Mammary epithelial cell (primary cell): ENCODE measurements at regions of chr15 and their contacts with region 1.

Region 1: GRCh38 chr15:51162865-51163762 is 68.4 kb upstream of the TNFAIP8L3 start:
- DNase-seq: peak; percentile 75
- H3K4me3 ChIP-seq: peak overlapping the region in 2 of 3 experiments; percentile 8 to 34
- H3K27ac ChIP-seq: peak overlapping the region; percentile 47
- H3K4me1 ChIP-seq: peaks cover 8% of the 10 kb centered on the region
- H3K27me3 ChIP-seq: no peaks in the 10 kb centered on the region
- CTCF ChIP-seq: peak; percentile 97

Region 2: GRCh38 chr15:51083641-51084166 is 79.4 kb before region 1 on chr15:
- CTCF ChIA-PET with region 1: no interaction called
- dilution Hi-C with region 1: no loop called
- in situ Hi-C with region 1: no loop called
- intact Hi-C with region 1: no loop called
- DNase-seq: no peak
- H3K4me3 ChIP-seq: no peak overlapping the region
- H3K27ac ChIP-seq: no peak overlapping the region
- H3K4me1 ChIP-seq: peaks cover 18% of the 10 kb centered on the region
- H3K27me3 ChIP-seq: no peaks in the 10 kb centered on the region
- CTCF ChIP-seq: no peak

Region 3: GRCh38 chr15:51192521-51193280 is 29.6 kb after region 1 on chr15:
- CTCF ChIA-PET with region 1: interaction called, 28 read pairs
- dilution Hi-C with region 1: no loop called
- in situ Hi-C with region 1: no loop called
- intact Hi-C with region 1: loop called (anchors 1 kb)
- DNase-seq: peak; percentile 83
- H3K4me3 ChIP-seq: no peak overlapping the region
- H3K27ac ChIP-seq: no peak overlapping the region
- H3K4me1 ChIP-seq: peaks cover 29% of the 10 kb centered on the region
- H3K27me3 ChIP-seq: no peaks in the 10 kb centered on the region
- CTCF ChIP-seq: peak; percentile 75 to 96

Region 4: GRCh38 chr15:51310097-51310501 is 147.0 kb after region 1 on chr15:
- CTCF ChIA-PET with region 1: interaction called, 16 read pairs
- dilution Hi-C with region 1: no loop called
- in situ Hi-C with region 1: no loop called
- intact Hi-C with region 1: no loop called
- DNase-seq: no peak
- H3K4me3 ChIP-seq: no peak overlapping the region
- H3K27ac ChIP-seq: no peak overlapping the region
- H3K4me1 ChIP-seq: peaks cover 13% of the 10 kb centered on the region
- H3K27me3 ChIP-seq: no peaks in the 10 kb centered on the region
- CTCF ChIP-seq: no peak

Region 5: GRCh38 chr15:51401872-51402517 is 238.9 kb after region 1 on chr15:
- CTCF ChIA-PET with region 1: interaction called, 11 read pairs
- dilution Hi-C with region 1: no loop called
- in situ Hi-C with region 1: no loop called
- intact Hi-C with region 1: loop called (anchors 5 kb)
- DNase-seq: no peak
- H3K4me3 ChIP-seq: no peak overlapping the region
- H3K27ac ChIP-seq: no peak overlapping the region
- H3K4me1 ChIP-seq: no peaks in the 10 kb centered on the region
- H3K27me3 ChIP-seq: no peaks in the 10 kb centered on the region
- CTCF ChIP-seq: peak; percentile 43 to 60